Activated naive CD8-positive, alpha-beta T cell treated with anti-CD3 and anti-CD28 coated beads, Interleukin-2, amount 10 ng/mL, durations not matched to agents 7 days and 5 days (primary cell): ENCODE measurements at regions of chr18 and their contacts with region 1.

Region 1: GRCh38 chr18:21704603-21705364 is at the start of gene ABHD3:
- DNase-seq: peak; percentile 94
- ATAC-seq: peak; percentile 96
- H3K4me3 Mint-ChIP-seq: peak within 1 kb of the TSS; percentile 98
- H3K27ac Mint-ChIP-seq: peak within 1 kb of the TSS; percentile 94
- H3K4me1 Mint-ChIP-seq: peaks cover 27% of the 10 kb centered on the region
- H3K27me3 Mint-ChIP-seq: no peaks in the 10 kb centered on the region
- total RNA-seq, gene ABHD3: 50.7 to 52.8 TPM

Region 2: GRCh38 chr18:21600526-21601410 is 104.0 kb before region 1 on chr18 and contains the start of gene ESCO1:
- POLR2A ChIA-PET with region 1: interaction called, 12 read pairs
- DNase-seq: peak; percentile 94
- ATAC-seq: peak; percentile 93
- H3K4me3 Mint-ChIP-seq: peak within 1 kb of the TSS; percentile 97
- H3K27ac Mint-ChIP-seq: peak within 1 kb of the TSS; percentile 97
- H3K4me1 Mint-ChIP-seq: peaks cover 19% of the 10 kb centered on the region
- H3K27me3 Mint-ChIP-seq: no peaks in the 10 kb centered on the region
- total RNA-seq, gene ESCO1: 24.3 to 26.1 TPM

Region 3: DNA sequence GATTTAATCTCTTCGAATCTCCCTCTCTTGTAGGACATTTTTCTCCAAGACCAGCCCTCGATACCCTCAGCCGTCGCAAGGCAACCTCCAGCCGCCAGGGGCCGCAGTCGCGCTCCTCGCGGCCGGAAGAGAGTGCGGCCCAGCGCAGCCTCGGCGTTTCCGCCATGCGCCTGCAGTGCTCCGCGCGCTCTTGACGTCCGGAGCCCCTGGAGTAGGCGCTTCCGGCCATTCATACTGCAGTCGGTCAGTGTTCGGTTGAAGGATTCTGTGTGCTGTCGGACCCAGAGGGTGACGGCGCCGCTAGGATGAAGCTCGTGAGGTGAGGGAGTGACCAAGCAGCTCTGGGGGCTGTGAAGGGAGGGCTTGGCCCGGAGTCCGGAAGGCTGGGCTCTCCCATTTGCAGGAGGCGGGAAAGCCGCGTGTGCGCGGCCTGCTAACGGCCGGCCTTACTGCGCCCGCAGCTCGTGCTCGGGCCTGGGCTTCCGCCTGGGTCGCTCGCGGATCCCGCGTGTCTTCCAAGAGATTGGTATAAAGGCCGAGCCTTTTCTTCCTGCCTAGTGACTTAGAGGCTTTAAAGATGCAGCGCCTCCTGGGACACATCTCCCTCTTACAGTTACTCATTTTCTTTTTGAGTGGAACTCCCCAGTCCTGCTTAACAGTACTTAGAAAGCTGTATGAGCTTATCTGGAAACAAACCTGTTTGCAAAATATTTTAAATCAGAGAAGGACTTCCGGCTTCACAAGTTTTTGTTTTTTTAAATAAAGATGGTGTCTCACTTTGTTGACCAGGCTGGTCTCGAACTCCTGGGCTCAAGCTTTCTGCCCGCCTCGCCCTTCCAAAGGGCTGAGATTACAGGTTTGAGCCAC is 92.4 kb before region 1 on chr18 and contains the start of gene SNRPD1:
- POLR2A ChIA-PET with region 1: interaction called, 10 read pairs
- DNase-seq: peak; percentile 96
- ATAC-seq: peak; percentile 97
- H3K4me3 Mint-ChIP-seq: peak within 1 kb of the TSS; percentile 100
- H3K27ac Mint-ChIP-seq: peak within 1 kb of the TSS; percentile 100
- H3K4me1 Mint-ChIP-seq: peaks cover 25% of the 10 kb centered on the region
- H3K27me3 Mint-ChIP-seq: no peaks in the 10 kb centered on the region
- total RNA-seq, gene SNRPD1: 74.6 to 75.1 TPM

Region 4: GRCh38 chr18:21663578-21663977 is 41.2 kb before region 1 on chr18:
- POLR2A ChIA-PET with region 1: no interaction called
- DNase-seq: no peak
- ATAC-seq: no peak
- H3K4me3 Mint-ChIP-seq: no peak overlapping the region
- H3K27ac Mint-ChIP-seq: no peak overlapping the region
- H3K4me1 Mint-ChIP-seq: peaks cover 3% of the 10 kb centered on the region
- H3K27me3 Mint-ChIP-seq: no peaks in the 10 kb centered on the region

Region 5: DNA sequence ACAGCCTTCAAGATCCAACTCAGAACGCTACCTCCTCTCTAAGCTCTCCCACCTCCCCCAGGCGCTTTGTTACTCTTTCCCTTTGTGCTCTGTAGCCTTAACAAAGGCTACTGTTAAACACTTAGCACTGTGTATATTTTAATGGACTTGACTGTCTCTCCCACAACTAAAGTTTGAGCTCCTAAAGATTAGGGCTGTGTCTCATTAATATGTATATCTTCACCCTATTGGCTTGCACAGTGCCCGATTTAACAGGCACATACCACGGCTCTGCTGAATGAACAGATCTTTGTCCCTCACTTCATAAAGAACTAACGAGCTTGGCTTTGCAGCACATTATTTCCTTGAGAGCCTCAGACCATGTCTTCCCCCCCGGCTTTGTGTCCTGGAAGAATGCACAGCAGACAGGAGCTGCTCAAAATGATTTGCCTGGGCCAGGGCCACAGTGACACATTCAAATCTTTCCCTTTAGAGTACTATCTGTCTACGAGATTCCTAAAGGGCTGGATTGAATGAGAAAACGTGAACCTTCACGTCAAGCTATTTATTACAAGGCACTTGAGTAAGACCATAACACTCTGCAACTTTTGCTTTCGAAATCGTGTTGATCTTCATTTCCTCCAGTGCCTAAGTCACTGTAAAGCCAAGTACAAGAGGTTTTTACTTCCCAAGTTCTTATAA is 22.3 kb before region 1 on chr18:
- POLR2A ChIA-PET with region 1: interaction called, 13 read pairs
- DNase-seq: peak; percentile 41
- ATAC-seq: peak; percentile 85
- H3K4me3 Mint-ChIP-seq: no peak overlapping the region
- H3K27ac Mint-ChIP-seq: no peak overlapping the region
- H3K4me1 Mint-ChIP-seq: peaks cover 8% of the 10 kb centered on the region
- H3K27me3 Mint-ChIP-seq: no peaks in the 10 kb centered on the region

Region 6: DNA sequence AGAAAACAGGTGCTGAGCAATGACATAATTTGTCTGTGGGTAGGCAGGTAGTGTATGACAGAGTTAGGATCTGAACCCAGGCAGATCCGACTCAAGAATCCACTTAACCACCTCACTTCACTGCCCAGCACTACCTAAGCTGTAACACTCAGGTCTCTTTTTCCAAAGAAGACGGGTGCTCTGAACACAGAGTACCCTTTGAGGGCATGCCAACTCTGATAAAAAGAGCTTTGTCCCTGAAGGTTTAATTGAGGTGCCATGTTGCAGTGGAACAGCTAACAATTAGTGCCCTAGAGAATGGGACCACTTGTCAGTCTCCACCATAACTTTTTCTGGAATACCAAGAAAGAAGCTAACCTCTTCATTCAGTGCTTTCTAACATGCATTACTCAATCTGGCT is 11.5 kb before region 1 on chr18:
- POLR2A ChIA-PET with region 1: no interaction called
- DNase-seq: no peak
- ATAC-seq: no peak
- H3K4me3 Mint-ChIP-seq: no peak overlapping the region
- H3K27ac Mint-ChIP-seq: no peak overlapping the region
- H3K4me1 Mint-ChIP-seq: peaks cover 6% of the 10 kb centered on the region
- H3K27me3 Mint-ChIP-seq: no peaks in the 10 kb centered on the region

Region 7: DNA sequence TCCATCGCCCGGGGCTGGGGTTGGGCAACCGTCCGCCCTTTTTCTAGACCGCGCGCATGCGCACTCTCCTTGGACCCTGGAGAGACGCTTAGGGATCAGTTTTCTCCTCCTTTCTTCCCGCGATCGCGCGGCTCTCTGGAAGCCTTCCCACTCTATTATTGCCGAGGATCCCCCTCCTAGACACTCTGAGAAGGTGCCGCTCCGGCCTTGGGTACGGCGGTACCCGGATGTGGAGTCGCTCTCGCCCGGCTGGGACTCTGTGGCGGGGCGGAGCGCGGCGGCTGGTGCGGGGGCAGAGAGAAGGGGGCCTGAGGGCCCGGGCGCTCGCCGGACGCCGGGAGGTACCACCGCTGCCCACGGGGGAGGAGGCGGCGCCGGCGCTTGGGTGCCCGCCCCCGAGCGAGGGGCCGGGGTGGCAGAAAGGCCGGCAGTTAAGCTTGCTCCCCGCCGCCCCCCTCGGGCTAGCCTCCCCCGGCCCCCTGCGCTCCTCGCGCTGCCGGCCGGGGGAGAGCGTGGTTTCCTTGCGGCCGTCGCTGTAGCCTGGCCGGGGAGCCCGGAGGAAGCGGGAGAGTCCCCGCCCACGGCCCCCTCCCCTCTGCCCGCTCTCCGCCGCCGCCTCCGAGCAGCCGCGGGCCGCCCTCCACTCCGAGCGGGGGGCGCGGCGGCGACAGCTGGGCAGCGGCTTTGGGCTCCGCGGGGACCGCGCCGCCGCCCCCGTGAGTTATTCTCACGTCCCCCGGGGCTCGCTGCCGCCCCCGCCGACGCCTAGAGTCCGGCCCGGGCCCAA is 36.1 kb after region 1 on chr18 and contains the start of gene MIB1:
- POLR2A ChIA-PET with region 1: interaction called, 64 read pairs
- DNase-seq: peak; percentile 99
- ATAC-seq: peak; percentile 72
- H3K4me3 Mint-ChIP-seq: peak within 1 kb of the TSS; percentile 92
- H3K27ac Mint-ChIP-seq: peak within 1 kb of the TSS; percentile 95
- H3K4me1 Mint-ChIP-seq: peaks cover 33% of the 10 kb centered on the region
- H3K27me3 Mint-ChIP-seq: peaks cover 10% of the 10 kb centered on the region
- total RNA-seq, gene MIB1: 34.4 to 40.8 TPM